ENCODE measurements at regions of chr9 and their contacts with region 1.

Region 1: DNA sequence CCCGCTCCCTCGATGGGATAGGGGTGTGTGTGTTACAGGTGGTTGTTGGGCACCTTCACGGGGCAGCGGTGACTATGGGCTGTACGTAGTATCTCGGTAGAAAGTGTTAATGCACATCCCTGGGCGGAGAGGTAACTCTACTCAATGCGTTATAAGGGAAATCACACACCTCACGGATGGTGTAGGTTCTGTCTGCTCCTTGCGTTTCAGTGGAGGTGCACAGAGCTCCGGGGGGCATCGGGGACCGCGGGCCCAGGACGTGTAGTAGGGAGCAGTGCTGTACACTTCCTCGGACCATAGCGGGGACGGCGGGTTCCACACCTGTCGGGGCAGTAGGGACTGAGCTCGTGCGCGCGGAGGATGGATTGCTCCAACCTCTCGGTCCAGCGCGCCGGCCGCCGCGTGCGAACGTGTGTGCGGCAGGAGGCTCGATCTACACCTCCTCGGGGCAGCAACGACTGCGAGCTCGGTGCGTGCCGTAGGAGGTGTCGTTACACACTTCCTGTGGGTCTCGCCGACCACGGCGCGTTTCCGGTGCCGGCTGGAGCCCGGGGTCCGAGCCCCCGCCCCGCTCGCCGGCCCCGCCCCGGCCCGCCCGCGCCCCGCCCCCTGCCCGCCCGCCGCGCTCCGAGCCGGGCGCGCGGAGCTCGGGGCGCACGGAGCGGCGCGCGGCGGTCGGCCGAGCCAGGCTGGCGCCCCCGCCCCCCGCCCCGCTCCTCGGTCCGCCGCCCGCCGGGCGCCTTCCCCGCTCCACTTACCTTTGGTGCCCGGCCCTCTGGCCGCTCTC is at the start of gene KIAA1958:
- DNase-seq: peak; percentile 69 to 92 (median 76)
- ATAC-seq: peak; percentile 80 to 83
- H3K4me3 Mint-ChIP-seq: peak within 1 kb of the TSS; percentile 92 to 100 (median 99)
- H3K27ac Mint-ChIP-seq: peak within 1 kb of the TSS; percentile 92 to 99 (median 98)
- H3K4me1 Mint-ChIP-seq: peaks cover 10 to 45% (median 38%) of the 10 kb centered on the region in 4 donors
- H3K27me3 Mint-ChIP-seq: no peaks in the 10 kb centered on the region
- polyA plus RNA-seq, gene KIAA1958: 2.6 to 4.3 (median 3.7) TPM

Region 2: GRCh38 chr9:112379177-112380101 is 107.0 kb before region 1 on chr9:
- POLR2A ChIA-PET with region 1: interaction called, 18 read pairs
- DNase-seq: peak; percentile 92 to 98 (median 95)
- ATAC-seq: peak; percentile 92 to 94
- H3K4me3 Mint-ChIP-seq: peak overlapping the region; percentile 93 to 100 (median 99)
- H3K27ac Mint-ChIP-seq: peak overlapping the region; percentile 95 to 98 (median 98)
- H3K4me1 Mint-ChIP-seq: peaks cover 26 to 67% (median 55%) of the 10 kb centered on the region in 4 donors
- H3K27me3 Mint-ChIP-seq: no peaks in the 10 kb centered on the region

Region 3: DNA sequence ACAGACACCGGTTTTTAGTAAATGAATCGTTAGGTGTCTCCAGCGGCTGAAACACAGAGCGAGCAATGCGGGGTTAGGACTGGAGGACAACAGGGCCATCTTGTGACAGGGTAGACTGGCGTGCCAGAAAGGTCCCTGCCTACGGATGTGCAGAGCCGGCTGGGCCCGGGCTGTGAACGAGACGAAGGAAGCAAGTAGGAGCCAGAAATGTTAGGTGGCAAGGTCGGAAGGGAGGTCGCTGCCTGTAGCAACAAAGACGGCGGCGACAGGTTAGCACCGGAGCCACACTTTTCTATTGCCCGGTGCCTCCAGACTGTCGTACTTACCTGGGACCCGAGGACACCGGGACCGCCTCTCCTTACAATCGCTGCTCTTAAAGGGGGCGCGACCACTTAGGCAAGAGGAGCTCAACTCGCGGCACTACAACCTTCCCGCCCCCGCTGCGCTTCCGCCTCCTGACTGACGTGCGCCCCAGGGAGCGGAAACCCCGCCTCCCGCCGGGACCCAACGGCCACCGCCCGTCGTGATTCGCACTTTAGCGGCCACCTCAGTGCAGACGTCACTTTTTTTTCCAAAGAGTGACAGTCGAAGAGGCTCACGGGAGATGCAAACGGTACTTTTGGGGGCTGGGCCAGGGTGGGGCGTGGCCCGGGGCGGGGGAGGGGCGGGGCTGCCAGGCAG is 231.4 kb after region 1 on chr9 and contains the start of gene INIP:
- POLR2A ChIA-PET with region 1: interaction called, 19 read pairs
- DNase-seq: peak; percentile 92 to 99 (median 98)
- ATAC-seq: peak; percentile 88 to 89
- H3K4me3 Mint-ChIP-seq: peak within 1 kb of the TSS; percentile 90 to 100 (median 96)
- H3K27ac Mint-ChIP-seq: peak within 1 kb of the TSS; percentile 95 to 99 (median 98)
- H3K4me1 Mint-ChIP-seq: peaks cover 5 to 30% (median 19%) of the 10 kb centered on the region in 4 donors
- H3K27me3 Mint-ChIP-seq: no peaks in the 10 kb centered on the region
- polyA plus RNA-seq, gene INIP: 26.6 to 38.9 (median 38.5) TPM

Measured in naive thymus-derived CD8-positive, alpha-beta T cell (primary cell).